AG04449 (cell line): ENCODE measurements at regions of chr12 and their contacts with region 1.

Region 1: DNA sequence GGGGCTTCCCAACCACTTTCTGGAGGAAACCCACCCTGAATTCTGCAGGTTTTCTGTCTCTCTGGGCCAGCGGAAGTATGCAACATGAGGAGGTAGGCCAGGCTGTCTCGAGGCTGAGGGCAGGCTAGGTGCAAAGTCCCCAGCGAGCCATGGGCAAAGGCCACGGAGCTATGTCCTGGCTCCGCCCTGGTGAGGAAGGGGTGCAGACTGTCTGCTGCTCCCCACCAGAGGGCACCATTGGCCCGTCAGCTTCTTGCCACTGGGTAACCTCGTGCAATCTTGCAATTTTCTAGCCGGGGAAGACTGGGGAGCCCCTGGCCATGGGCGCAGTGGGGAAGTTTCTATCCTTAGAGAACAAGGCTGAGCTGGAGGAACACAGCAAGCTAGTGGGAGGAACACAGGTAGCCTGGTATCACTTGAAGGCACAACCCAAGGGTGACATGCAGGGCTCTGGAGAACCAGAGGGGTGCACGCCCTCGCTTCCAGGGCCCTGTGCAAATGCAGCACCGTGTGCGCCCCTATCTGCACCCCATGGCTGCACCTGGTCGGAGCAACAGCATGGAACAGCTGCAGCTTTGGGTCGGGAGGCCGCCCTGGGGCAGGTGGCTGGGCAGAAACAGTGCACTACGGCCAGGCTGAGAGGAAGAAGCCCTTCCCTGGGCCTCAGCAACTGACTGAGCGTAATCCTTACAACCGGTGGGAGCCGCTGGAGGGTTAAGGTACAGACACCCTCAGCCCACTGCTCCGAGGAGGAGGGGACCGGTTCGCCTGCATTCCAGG is 27.6 kb upstream of the RPLP0 start:
- DNase-seq: no peak
- H3K4me3 ChIP-seq: peak overlapping the region; percentile 4; the same call in 1 of the 2 replicates
- CTCF ChIP-seq: peak; percentile 94

Region 2: DNA sequence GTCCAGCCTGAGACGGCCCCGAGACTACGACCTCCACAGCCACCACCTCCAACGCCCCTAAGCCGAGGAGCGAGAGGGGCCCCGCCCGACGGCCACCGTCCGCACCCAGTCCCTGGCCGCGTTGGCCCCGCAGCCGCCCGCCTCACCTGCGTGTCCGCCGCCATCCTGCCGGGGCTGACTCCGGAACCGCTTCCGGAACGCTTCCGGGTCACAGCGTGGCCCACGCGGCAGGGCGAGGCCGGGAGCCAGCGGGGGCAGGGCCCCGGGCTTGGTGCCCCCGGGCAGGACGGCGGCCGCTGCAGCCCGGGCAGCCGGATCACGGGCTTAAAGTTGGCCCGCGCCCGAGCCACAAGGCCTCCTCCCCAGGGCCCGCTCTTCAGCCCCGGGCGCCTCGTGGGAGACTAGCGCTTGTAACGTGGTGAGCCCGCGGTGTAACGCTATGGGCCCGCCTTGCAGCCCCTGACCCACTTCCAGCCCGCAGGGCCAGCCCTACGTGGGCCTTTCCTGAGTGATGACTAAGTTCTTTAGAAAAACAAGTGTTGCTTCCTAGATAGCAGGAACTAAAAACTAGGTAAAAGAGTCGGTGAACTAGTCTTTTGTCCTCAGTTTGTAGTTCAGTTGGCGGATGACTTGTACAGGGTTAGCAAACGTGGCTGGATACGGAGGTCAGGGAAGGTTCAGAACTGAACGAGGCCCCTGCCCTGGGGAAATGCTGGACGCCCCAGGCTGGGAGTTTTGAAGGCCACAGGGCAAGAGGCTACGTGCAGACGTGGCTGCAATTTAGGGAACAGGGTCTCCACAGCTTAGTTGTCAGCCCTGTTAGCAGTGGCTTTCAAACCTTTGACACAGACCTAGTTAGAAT is 33.7 kb before region 1 on chr12 and contains the start of gene GCN1:
- CTCF ChIA-PET with region 1: interaction called, 280 read pairs
- POLR2A ChIA-PET with region 1: interaction called, 122 read pairs
- DNase-seq: no peak
- H3K4me3 ChIP-seq: peak within 1 kb of the TSS; percentile 84
- CTCF ChIP-seq: no peak

Region 3: DNA sequence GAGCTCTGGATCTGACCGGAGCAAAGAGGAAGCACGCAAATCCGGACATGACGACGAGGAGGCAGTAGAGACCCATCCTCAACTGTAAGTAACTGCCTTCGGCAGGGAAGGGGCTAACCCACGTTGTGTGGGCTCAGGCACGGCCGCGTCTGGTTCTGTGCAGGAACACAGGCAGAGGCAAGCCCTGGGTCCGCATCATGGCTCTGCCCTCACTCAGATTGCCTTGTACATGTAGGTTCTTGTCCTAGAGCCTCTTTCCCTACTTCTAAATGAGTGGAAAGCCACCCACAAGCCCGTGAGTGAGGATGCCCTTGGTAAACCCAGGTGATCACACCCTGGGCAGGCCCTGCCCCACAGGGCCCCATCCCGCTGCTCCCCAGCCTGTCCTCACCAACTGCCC is 18.6 kb before region 1 on chr12:
- CTCF ChIA-PET with region 1: interaction called, 280 read pairs
- POLR2A ChIA-PET with region 1: no interaction called
- DNase-seq: no peak
- H3K4me3 ChIP-seq: no peak overlapping the region
- CTCF ChIP-seq: no peak

Region 4: DNA sequence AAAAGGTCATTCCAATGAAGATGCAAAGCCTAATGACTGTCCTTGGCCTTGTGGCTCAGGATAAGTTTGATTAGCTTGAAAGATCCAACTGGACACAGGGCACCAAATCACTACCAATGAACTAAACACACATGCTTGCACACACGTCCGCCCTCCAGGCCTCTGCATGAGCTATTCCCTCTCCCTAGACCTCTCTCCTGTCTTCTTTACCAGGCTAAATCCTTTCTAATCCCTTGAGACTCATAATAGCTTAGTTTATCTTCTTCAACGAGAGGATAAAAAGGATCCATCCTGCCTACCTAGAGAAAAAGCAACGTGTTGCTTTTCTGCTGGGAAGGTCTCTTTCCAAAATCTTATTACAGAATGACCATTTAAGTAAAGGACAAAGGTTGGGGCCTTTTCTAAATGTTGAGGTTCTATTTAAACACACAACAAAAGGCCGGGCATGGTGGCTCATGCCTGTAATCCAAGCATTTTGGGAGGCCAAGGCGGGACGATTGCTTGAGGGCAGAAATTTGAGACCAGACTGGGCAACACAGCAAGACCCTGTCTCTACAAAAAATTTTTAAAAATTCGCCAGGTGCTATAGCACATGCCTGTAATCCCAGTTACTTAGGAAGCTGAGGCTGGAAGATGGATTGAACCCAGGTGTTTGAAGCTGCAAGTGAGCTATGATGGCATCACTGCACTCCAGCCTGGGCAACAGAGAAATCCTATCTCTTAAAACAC is 14.7 kb after region 1 on chr12:
- CTCF ChIA-PET with region 1: interaction called, 1,066 read pairs
- POLR2A ChIA-PET with region 1: interaction called, 14 read pairs
- DNase-seq: no peak
- H3K4me3 ChIP-seq: no peak overlapping the region
- CTCF ChIP-seq: no peak

Region 5: DNA sequence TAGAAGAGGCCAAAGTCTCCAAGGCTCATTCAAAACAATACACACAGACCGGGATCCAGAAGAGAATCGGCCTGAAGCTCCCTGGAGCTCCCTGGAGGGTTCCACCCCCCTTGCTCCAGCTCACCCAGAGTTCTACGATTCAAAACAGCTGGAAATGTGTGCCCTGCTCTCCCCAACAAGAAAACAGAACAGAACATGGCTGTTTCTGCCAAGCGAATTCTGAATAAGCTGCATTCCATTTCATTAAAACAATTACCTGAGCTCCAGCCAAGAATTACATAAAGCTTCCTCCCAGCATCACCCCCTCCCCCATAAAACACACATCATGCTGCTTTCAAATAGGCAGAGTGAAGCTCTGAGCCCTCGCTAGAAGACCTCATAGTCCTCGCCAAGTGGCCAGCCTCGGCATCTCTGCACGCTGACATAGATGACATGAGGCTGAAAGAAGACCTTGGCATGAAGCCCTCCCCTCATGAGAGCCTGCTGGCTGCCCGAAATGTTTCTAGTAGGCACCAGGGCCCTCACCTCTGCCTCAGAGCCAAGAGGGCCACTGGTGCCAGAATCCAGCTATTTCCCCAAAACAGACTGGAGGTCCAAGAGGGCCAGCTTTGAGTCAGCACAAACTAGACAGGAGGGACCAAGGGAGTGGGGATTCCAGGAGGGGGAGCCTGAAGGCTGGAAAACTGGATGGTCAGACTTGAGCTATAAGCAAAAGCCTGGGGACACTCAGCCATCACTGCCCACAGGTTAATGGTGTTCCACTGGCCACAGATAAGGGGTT is 28.8 kb after region 1 on chr12:
- CTCF ChIA-PET with region 1: interaction called, 1,066 read pairs
- POLR2A ChIA-PET with region 1: interaction called, 98 read pairs
- DNase-seq: peak; percentile 65
- H3K4me3 ChIP-seq: peak overlapping the region; percentile 29
- CTCF ChIP-seq: peak; percentile 13

Region 6: DNA sequence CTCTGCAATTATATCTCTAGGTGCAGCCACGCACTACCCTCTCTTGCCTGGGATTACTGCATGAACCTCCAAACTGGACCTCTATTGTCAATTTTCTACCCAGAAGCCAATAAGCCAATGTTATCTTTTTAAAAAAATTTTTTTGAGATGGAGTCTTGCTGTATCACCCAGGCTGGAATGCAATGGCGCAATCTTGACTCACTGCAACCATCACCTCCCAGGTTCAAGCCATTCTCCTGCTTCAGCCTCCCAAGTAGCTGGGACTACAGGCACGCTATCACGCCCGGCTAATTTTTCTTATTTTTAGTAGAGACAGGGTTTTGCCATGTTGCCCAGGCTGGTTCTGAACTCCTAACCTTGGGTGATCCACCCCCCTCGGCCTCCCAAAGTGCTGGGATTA is 48.3 kb after region 1 on chr12:
- CTCF ChIA-PET with region 1: interaction called, 1,066 read pairs
- POLR2A ChIA-PET with region 1: no interaction called
- DNase-seq: no peak
- H3K4me3 ChIP-seq: no peak overlapping the region
- CTCF ChIP-seq: no peak

Region 7: GRCh38 chr12:120301962-120302815 is 73.7 kb after region 1 on chr12 and contains the start of gene SIRT4:
- CTCF ChIA-PET with region 1: interaction called, 13 read pairs
- POLR2A ChIA-PET with region 1: no interaction called
- DNase-seq: peak; percentile 65
- H3K4me3 ChIP-seq: peak within 1 kb of the TSS; percentile 77
- CTCF ChIP-seq: peak; percentile 71

Region 8: DNA sequence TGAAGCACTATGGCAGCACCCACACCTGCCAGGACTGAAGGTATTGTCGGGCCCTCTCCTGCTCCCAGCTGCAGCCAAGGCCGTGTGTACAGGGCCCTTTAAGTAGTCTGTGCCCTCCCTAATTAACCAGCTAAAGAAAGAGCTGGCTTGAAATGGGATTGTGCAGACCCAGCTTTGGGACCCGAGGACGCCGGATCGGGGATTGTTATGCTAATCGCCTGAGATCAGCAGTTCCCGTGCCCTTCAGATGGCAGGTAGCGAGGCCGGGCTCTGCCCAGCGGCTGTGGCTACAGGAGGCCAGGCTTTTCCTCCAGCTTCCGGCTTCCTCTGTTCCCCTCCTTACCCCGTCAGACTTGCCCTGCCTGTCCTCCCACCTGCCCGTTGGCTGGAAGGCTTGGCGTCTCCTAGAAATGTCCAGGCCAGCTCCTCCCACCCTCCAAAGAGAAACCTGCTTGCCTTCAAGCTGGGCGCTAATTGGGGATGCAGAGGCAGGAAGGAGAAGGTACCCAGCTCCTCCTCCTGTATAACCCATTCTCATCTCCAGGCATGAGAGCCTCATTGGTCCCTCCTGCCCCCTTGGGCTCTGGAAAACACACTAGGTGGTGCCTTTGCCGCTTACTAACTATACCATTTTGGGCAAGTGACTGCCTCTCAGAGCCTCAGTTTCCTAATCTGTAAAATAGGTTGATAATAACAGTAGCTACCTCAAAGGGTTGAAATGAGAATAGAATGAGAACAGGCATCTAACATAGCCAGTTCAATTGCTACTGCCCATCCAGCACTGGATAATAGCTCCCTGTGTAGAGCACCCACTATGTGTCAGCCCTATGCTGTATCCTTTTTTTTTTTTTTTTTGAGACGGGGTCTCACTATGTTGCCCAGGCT is 166.2 kb after region 1 on chr12:
- CTCF ChIA-PET with region 1: no interaction called
- POLR2A ChIA-PET with region 1: no interaction called
- DNase-seq: no peak
- H3K4me3 ChIP-seq: no peak overlapping the region
- CTCF ChIP-seq: no peak